ENCODE measurements at regions of chr13 and their contacts with region 1.

Region 1: GRCh38 chr13:71867131-71867814 is at the start of gene DACH1:
- DNase-seq: peak; percentile 53 to 71
- ATAC-seq: peak; percentile 77 to 84 (median 80)
- H3K4me3 ChIP-seq: peak within 1 kb of the TSS; percentile 53 to 89 (median 80)
- H3K27ac ChIP-seq: peak within 1 kb of the TSS in 9 of 10 donors; percentile 48 to 93 (median 87)
- H3K4me1 ChIP-seq: peaks cover 0 to 26% (median 11%) of the 10 kb centered on the region in 9 donors
- H3K27me3 ChIP-seq: peaks cover 0 to 48% (median 17%) of the 10 kb centered on the region in 7 donors
- CTCF ChIP-seq: no peak
- total RNA-seq, gene DACH1: 1.8 to 5.2 (median 2.8) TPM

Region 2: GRCh38 chr13:71399631-71400215 is 467.6 kb before region 1 on chr13:
- intact Hi-C with region 1: loop called in 1 of 10 experiments (anchors 10 kb)
- DNase-seq: no peak
- ATAC-seq: no peak
- H3K4me3 ChIP-seq: no peak overlapping the region
- H3K27ac ChIP-seq: no peak overlapping the region
- H3K4me1 ChIP-seq: peaks cover 0 to 7% (median 0%) of the 10 kb centered on the region in 9 donors
- H3K27me3 ChIP-seq: no peaks in the 10 kb centered on the region
- CTCF ChIP-seq: no peak

Region 3: DNA sequence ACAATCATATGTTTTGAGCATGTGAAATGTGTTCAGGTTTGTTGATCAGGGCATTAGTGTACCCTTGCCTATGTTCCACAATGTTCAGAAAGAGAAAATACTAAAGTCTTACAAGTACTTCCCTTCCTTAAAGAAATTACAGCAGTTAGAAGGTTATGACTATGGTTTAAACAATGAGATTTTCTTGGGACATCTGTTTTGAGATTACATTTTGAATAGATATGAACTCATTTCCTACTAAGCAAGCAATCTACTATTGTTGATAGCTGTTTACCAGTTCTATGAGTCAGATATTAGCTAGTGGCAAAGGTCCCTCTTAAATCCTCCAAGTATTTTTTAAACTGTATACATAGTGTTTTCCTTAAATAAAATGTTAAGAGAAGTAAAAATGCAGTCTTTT is 241.6 kb before region 1 on chr13:
- intact Hi-C with region 1: loop called in 1 of 10 experiments (anchors 10 kb)
- DNase-seq: no peak
- ATAC-seq: peak in 5 of 8 donors; percentile 49 to 88 (median 77)
- H3K4me3 ChIP-seq: peak overlapping the region in 1 of 10 donors; percentile 0
- H3K27ac ChIP-seq: peak overlapping the region in 9 of 10 donors; percentile 15 to 82 (median 64)
- H3K4me1 ChIP-seq: peaks cover 0 to 35% (median 6%) of the 10 kb centered on the region in 9 donors
- H3K27me3 ChIP-seq: no peaks in the 10 kb centered on the region
- CTCF ChIP-seq: no peak

Region 4: GRCh38 chr13:71759651-71760511 is 107.4 kb before region 1 on chr13:
- intact Hi-C with region 1: loop called in 1 of 10 experiments (anchors 10 kb)
- DNase-seq: no peak
- ATAC-seq: no peak
- H3K4me3 ChIP-seq: no peak overlapping the region
- H3K27ac ChIP-seq: peak overlapping the region in 1 of 10 donors; percentile 2
- H3K4me1 ChIP-seq: peaks cover 0 to 19% (median 7%) of the 10 kb centered on the region in 9 donors
- H3K27me3 ChIP-seq: no peaks in the 10 kb centered on the region
- CTCF ChIP-seq: no peak

Region 5: GRCh38 chr13:71789693-71790329 is 77.5 kb before region 1 on chr13:
- intact Hi-C with region 1: loop called in 1 of 10 experiments (anchors 5 kb)
- DNase-seq: no peak
- ATAC-seq: no peak
- H3K4me3 ChIP-seq: no peak overlapping the region
- H3K27ac ChIP-seq: peak overlapping the region in 1 of 10 donors; percentile 8
- H3K4me1 ChIP-seq: peaks cover 0 to 9% (median 0%) of the 10 kb centered on the region in 9 donors
- H3K27me3 ChIP-seq: no peaks in the 10 kb centered on the region
- CTCF ChIP-seq: no peak